Panc1 (cell line): ENCODE measurements at regions of chr12 and their contacts with region 1.

Region 1: GRCh38 chr12:26088993-26089392 is 35.8 kb downstream of the BHLHE41 start:
- DNase-seq: no peak
- ATAC-seq: no peak
- H3K4me3 ChIP-seq: no peak overlapping the region
- H3K27ac ChIP-seq: peak overlapping the region; percentile 2; the same call in 1 of the 2 replicates
- H3K4me1 ChIP-seq: peaks cover 18% of the 10 kb centered on the region
- H3K27me3 ChIP-seq: no peaks in the 10 kb centered on the region
- CTCF ChIP-seq: no peak

Region 2: GRCh38 chr12:25682421-25682820 is 406.6 kb before region 1 on chr12:
- CTCF ChIA-PET with region 1: no interaction called
- POLR2A ChIA-PET with region 1: interaction called, 14 read pairs
- in situ Hi-C with region 1: no loop called
- intact Hi-C with region 1: no loop called
- DNase-seq: no peak
- ATAC-seq: no peak
- H3K4me3 ChIP-seq: no peak overlapping the region
- H3K27ac ChIP-seq: no peak overlapping the region
- H3K4me1 ChIP-seq: no peaks in the 10 kb centered on the region
- H3K27me3 ChIP-seq: peaks cover 10% of the 10 kb centered on the region
- CTCF ChIP-seq: no peak

Region 3: GRCh38 chr12:25769076-25769945 is 319.7 kb before region 1 on chr12:
- CTCF ChIA-PET with region 1: no interaction called
- POLR2A ChIA-PET with region 1: interaction called, 13 read pairs
- in situ Hi-C with region 1: no loop called
- intact Hi-C with region 1: no loop called
- DNase-seq: no peak
- ATAC-seq: peak; percentile 95
- H3K4me3 ChIP-seq: no peak overlapping the region
- H3K27ac ChIP-seq: peak overlapping the region; percentile 3; the same call in 1 of the 2 replicates
- H3K4me1 ChIP-seq: peaks cover 4% of the 10 kb centered on the region; the same call in 1 of the 2 replicates
- H3K27me3 ChIP-seq: no peaks in the 10 kb centered on the region
- CTCF ChIP-seq: no peak

Region 4: DNA sequence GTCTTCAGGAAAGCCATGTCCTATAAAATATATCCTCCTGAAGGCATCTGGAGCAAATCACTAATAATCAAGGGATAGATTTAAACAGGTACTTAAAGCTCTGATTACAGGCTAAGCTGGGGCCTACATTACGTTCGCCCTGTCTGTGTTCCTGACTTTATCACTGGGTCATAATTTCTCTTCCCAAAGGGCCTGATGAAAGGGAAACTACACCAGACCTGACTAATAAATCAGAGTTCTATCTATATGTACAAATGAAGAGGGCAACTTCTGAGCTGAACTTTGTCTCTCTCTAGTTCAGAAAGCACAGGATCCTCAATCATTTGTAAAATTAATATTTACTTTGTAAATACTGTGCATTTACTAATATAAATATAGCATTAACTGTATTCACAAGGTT is 174.4 kb before region 1 on chr12:
- CTCF ChIA-PET with region 1: no interaction called
- POLR2A ChIA-PET with region 1: no interaction called
- in situ Hi-C with region 1: no loop called
- intact Hi-C with region 1: loop called (anchors 5 kb)
- DNase-seq: no peak
- ATAC-seq: no peak
- H3K4me3 ChIP-seq: no peak overlapping the region
- H3K27ac ChIP-seq: no peak overlapping the region
- H3K4me1 ChIP-seq: no peaks in the 10 kb centered on the region
- H3K27me3 ChIP-seq: no peaks in the 10 kb centered on the region; the same call in 1 of the 2 replicates
- CTCF ChIP-seq: no peak